ENCODE measurements at regions of chr2 and their contacts with region 1.

Region 1: DNA sequence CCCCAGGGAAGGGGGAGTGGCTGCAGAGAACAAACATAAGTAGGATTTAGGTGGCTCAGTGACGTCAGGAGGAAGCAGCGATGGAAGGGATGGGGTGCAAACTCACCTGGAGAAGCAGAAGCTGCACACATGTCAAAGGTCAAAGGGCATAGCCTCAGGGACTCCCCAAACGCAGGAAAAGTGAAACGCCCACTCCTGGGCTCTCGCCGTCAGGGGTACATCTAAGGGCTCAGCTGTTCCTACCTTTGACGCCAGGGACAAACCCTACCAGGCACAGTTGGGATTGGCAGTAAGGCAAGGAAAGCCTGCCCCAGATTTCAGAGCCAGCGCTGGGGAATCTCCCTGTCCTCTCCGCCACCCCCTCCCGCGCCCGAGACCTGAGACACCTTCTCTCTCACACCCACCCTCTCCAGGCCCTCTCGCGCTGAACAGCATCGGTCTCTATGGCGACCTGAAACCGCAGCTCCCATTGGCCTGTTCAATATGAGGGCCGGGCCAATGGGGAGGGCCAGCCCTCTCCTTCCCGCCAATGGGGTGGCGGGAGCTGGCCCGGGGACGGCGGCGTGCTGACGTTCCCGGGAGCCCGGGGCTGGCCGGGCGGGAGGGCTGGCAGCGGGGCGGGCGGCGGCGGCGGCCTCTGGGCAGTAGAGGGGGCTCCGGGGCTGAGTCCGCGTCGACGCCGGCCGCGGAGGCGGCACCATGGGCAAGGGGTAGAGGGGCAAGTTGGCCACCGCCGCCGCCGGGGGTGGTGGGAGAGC is at the starts of genes CCDC148 and PKP4:
- DNase-seq: peak; percentile 87 to 90
- ATAC-seq: peak; percentile 94 to 98 (median 96)
- H3K4me3 ChIP-seq: peak within 1 kb of the TSS; percentile 57 to 97 (median 91)
- H3K27ac ChIP-seq: peak within 1 kb of the TSS; percentile 73 to 98 (median 96)
- H3K4me1 ChIP-seq: peaks cover 0 to 41% (median 36%) of the 10 kb centered on the region in 9 donors
- H3K27me3 ChIP-seq: no peaks in the 10 kb centered on the region
- CTCF ChIP-seq: peak in 3 of 9 donors; percentile 32 to 48 (median 48)
- total RNA-seq, gene CCDC148: 0.36 to 1.4 (median 0.68) TPM
- total RNA-seq, gene PKP4: 36.2 to 59.0 (median 48.1) TPM

Region 2: GRCh38 chr2:158034199-158034866 is 422.2 kb before region 1 on chr2:
- intact Hi-C with region 1: loop called in 3 of 10 experiments (anchors 10 kb)
- DNase-seq: peak in 1 of 2 donors; percentile 54
- ATAC-seq: peak; percentile 50 to 75 (median 68)
- H3K4me3 ChIP-seq: no peak overlapping the region
- H3K27ac ChIP-seq: no peak overlapping the region
- H3K4me1 ChIP-seq: peaks cover 0 to 6% (median 0%) of the 10 kb centered on the region in 9 donors
- H3K27me3 ChIP-seq: peaks cover 0 to 3% (median 0%) of the 10 kb centered on the region in 7 donors
- CTCF ChIP-seq: peak; percentile 7 to 67 (median 52)

Region 3: GRCh38 chr2:158179660-158180059 is 276.8 kb before region 1 on chr2:
- intact Hi-C with region 1: loop called in 3 of 10 experiments (anchors 5 to 10 kb)
- DNase-seq: no peak
- ATAC-seq: peak in 6 of 8 donors; percentile 23 to 75 (median 51)
- H3K4me3 ChIP-seq: no peak overlapping the region
- H3K27ac ChIP-seq: no peak overlapping the region
- H3K4me1 ChIP-seq: peaks cover 0 to 18% (median 4%) of the 10 kb centered on the region in 9 donors
- H3K27me3 ChIP-seq: peaks cover 0 to 3% (median 0%) of the 10 kb centered on the region in 7 donors
- CTCF ChIP-seq: peak in 7 of 9 donors; percentile 44 to 66 (median 60)

Region 4: GRCh38 chr2:158391876-158392275 is 64.6 kb before region 1 on chr2:
- intact Hi-C with region 1: no loop called
- DNase-seq: no peak
- ATAC-seq: no peak
- H3K4me3 ChIP-seq: no peak overlapping the region
- H3K27ac ChIP-seq: no peak overlapping the region
- H3K4me1 ChIP-seq: no peaks in the 10 kb centered on the region
- H3K27me3 ChIP-seq: no peaks in the 10 kb centered on the region
- CTCF ChIP-seq: no peak

Region 5: DNA sequence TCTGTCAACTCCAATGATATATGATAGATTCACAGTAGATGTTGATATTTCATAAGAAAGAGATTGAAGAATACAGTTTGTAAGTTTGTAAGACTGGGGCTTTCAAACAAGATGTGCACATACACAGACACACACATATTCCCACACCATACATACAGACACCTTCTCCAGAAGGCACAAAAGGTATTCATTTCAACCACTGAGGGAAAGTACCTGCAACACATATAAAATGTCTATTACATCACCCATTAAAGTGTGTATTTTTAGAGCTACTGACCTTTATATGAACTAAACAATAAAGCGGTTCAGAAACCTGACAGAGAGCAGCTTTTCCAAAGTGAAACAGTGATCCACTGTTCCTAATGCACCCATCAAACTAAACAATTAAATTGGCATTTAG is 53.3 kb before region 1 on chr2:
- intact Hi-C with region 1: no loop called
- DNase-seq: no peak
- ATAC-seq: no peak
- H3K4me3 ChIP-seq: no peak overlapping the region
- H3K27ac ChIP-seq: no peak overlapping the region
- H3K4me1 ChIP-seq: peaks cover 0 to 11% (median 0%) of the 10 kb centered on the region in 9 donors
- H3K27me3 ChIP-seq: no peaks in the 10 kb centered on the region
- CTCF ChIP-seq: no peak

Region 6: GRCh38 chr2:158487419-158487818 is 30.9 kb after region 1 on chr2:
- intact Hi-C with region 1: no loop called
- DNase-seq: peak in 1 of 2 donors; percentile 34
- ATAC-seq: peak in 6 of 8 donors; percentile 42 to 73 (median 61)
- H3K4me3 ChIP-seq: no peak overlapping the region
- H3K27ac ChIP-seq: peak overlapping the region in 1 of 10 donors; percentile 19
- H3K4me1 ChIP-seq: peaks cover 0 to 68% (median 51%) of the 10 kb centered on the region in 9 donors
- H3K27me3 ChIP-seq: no peaks in the 10 kb centered on the region
- CTCF ChIP-seq: no peak

Region 7: GRCh38 chr2:158667586-158667985 is 211.1 kb after region 1 on chr2:
- intact Hi-C with region 1: loop called in 2 of 10 experiments (anchors 5 kb)
- DNase-seq: no peak
- ATAC-seq: peak; percentile 42 to 79 (median 64)
- H3K4me3 ChIP-seq: no peak overlapping the region
- H3K27ac ChIP-seq: peak overlapping the region in 7 of 10 donors; percentile 28 to 77 (median 62)
- H3K4me1 ChIP-seq: peaks cover 3 to 66% (median 36%) of the 10 kb centered on the region in 9 donors
- H3K27me3 ChIP-seq: no peaks in the 10 kb centered on the region
- CTCF ChIP-seq: no peak

Region 8: GRCh38 chr2:158745044-158745865 is 288.8 kb after region 1 on chr2:
- intact Hi-C with region 1: loop called (anchors 5 to 10 kb)
- DNase-seq: peak in 1 of 2 donors; percentile 62
- ATAC-seq: peak; percentile 40 to 80 (median 66)
- H3K4me3 ChIP-seq: no peak overlapping the region
- H3K27ac ChIP-seq: peak overlapping the region in 5 of 10 donors; percentile 18 to 65 (median 36)
- H3K4me1 ChIP-seq: peaks cover 15 to 60% (median 52%) of the 10 kb centered on the region in 9 donors
- H3K27me3 ChIP-seq: peaks cover 0 to 4% (median 0%) of the 10 kb centered on the region in 7 donors
- CTCF ChIP-seq: peak; percentile 27 to 71 (median 57)